Heart left ventricle (tissue), 16 donors: ENCODE measurements at regions of chr20 and their contacts with region 1.

Region 1: GRCh38 chr20:19397666-19398065 is 185.2 kb downstream of the SLC24A3 start:
- DNase-seq: no peak
- ATAC-seq: no peak
- H3K4me3 ChIP-seq: no peak overlapping the region
- H3K27ac ChIP-seq: no peak overlapping the region
- H3K4me1 ChIP-seq: no peaks in the 10 kb centered on the region
- H3K27me3 ChIP-seq: no peaks in the 10 kb centered on the region
- CTCF ChIP-seq: no peak
- POLR2A ChIP-seq: no peak

Region 2: DNA sequence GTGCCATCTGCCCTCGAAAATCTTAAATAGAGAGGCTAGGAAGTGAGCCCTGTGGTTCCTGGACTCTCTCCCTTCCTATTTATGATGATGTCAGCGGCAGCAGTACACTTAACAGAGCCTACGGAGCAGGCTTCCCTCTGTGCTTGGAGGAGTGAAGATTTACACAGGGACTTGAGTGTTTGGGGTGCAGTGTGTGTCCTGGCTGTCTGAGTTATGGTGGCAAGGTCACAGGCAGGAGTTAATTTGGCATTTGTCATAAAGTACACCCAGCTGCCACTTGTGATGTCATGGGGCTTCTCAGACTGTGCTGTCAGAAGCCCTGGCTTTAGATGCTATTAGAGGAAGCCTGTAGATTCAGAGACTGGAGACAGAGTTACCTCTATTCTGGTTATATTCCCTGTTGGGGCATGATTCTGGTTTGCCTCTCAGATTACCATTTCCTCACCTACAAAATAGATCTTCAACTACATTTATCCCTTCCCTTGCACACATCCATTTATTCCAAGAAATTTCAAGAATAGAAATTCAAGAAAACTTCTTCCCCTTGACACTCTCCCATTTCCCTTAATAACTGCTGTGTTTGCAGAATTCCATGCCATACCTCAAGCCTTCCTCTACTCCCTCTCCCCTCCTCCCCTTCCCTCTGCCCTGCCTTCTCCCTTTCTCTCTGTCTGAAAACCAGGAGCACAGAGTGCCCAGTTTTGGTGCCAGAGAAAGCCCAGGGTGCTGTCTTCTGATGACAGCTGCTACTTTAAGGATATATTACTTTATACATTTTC is 113.1 kb before region 1 on chr20:
- intact Hi-C with region 1: no loop called
- DNase-seq: no peak
- ATAC-seq: peak in 1 of 4 donors; percentile 43
- H3K4me3 ChIP-seq: no peak overlapping the region
- H3K27ac ChIP-seq: peak overlapping the region in 1 of 12 donors; percentile 64
- H3K4me1 ChIP-seq: peaks cover 0 to 20% (median 0%) of the 10 kb centered on the region in 12 donors
- H3K27me3 ChIP-seq: no peaks in the 10 kb centered on the region
- CTCF ChIP-seq: no peak
- POLR2A ChIP-seq: no peak

Region 3: GRCh38 chr20:19317237-19318069 is 80.2 kb before region 1 on chr20:
- intact Hi-C with region 1: loop called in 1 of 10 experiments (anchors 10 kb)
- DNase-seq: no peak
- ATAC-seq: no peak
- H3K4me3 ChIP-seq: no peak overlapping the region
- H3K27ac ChIP-seq: no peak overlapping the region
- H3K4me1 ChIP-seq: peaks cover 0 to 9% (median 0%) of the 10 kb centered on the region in 12 donors
- H3K27me3 ChIP-seq: no peaks in the 10 kb centered on the region
- CTCF ChIP-seq: no peak
- POLR2A ChIP-seq: no peak